Right cardiac atrium (tissue), 5 donors: ENCODE measurements at regions of chr11 and their contacts with region 1.

Region 1: GRCh38 chr11:9015677-9016076 is 11.9 kb upstream of the NRIP3 start:
- DNase-seq: peak; percentile 51 to 74 (median 64)
- ATAC-seq: peak; percentile 70 to 80
- H3K4me3 ChIP-seq: no peak overlapping the region
- H3K27ac ChIP-seq: no peak overlapping the region
- H3K4me1 ChIP-seq: peaks cover 13% of the 10 kb centered on the region
- H3K27me3 ChIP-seq: no peaks in the 10 kb centered on the region

Region 2: DNA sequence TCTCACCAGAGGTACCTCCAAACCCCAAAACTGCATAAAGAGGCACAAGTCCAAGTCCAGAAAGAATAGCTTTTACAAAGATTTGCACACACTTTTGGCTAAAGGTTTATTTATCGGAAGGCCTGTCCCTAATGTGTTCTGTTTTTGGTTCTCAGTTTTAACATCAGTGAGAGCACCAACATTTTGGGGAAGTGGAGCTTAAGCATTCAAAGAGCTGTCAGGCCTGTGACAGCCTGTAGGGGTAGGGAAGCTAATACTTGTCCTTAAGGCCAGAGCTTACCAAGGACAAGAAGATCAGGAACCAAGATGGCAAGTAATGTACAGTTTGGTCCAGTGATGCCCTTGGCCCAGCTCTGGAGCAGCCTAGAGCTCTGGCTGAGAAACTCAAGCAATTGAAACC is 114.6 kb after region 1 on chr11:
- intact Hi-C with region 1: loop called in 3 of 4 experiments (anchors 5 kb)
- DNase-seq: no peak
- ATAC-seq: no peak
- H3K4me3 ChIP-seq: no peak overlapping the region
- H3K27ac ChIP-seq: no peak overlapping the region
- H3K4me1 ChIP-seq: no peaks in the 10 kb centered on the region
- H3K27me3 ChIP-seq: no peaks in the 10 kb centered on the region

Region 3: DNA sequence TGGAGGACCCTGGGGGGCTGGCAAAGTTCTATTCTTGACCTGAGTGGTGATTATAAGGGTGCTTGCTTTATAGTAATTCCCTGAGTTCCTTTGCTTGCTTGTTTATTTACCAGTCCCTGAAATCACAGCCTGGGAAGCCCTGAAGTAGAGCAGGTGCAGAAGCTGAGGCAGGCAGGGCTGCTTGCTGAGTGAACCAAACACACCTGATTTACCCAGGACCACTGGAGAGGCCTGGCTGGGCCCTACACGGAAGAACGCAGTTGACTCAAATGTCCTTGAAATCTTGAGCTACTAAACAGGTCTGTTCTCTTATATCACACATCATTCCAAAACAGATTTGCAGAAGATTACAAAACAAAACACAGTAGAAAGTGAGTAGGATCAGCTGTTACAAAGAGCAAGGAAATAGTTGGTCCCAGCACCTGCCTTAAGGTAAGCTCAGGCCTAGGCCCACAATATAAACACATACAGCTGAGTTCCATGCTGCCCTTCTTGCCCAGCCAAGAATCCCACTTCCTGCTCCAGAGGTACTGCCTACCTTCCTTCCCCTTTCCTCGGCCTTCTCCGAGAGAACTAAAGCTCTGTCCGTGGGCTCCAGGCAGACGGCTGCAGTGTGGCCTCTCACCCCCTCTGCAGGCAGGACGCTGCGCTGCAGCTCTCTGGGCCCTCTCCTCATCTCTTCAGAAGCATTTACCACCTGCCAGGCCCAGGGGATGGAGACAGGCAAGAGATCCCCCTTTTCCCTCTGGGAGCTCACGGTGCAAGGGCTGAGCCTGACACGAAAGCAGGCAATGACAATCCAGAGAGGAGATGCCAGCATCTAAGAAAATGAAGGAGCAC is 121.8 kb after region 1 on chr11:
- intact Hi-C with region 1: loop called in 3 of 4 experiments (anchors 5 kb)
- DNase-seq: peak; percentile 65 to 90 (median 89)
- ATAC-seq: peak; percentile 88 to 91
- H3K4me3 ChIP-seq: no peak overlapping the region
- H3K27ac ChIP-seq: no peak overlapping the region
- H3K4me1 ChIP-seq: no peaks in the 10 kb centered on the region
- H3K27me3 ChIP-seq: no peaks in the 10 kb centered on the region

Region 4: GRCh38 chr11:9347100-9347499 is 331.4 kb after region 1 on chr11:
- intact Hi-C with region 1: no loop called
- DNase-seq: no peak
- ATAC-seq: no peak
- H3K4me3 ChIP-seq: no peak overlapping the region
- H3K27ac ChIP-seq: no peak overlapping the region
- H3K4me1 ChIP-seq: peaks cover 2% of the 10 kb centered on the region
- H3K27me3 ChIP-seq: no peaks in the 10 kb centered on the region

Region 5: DNA sequence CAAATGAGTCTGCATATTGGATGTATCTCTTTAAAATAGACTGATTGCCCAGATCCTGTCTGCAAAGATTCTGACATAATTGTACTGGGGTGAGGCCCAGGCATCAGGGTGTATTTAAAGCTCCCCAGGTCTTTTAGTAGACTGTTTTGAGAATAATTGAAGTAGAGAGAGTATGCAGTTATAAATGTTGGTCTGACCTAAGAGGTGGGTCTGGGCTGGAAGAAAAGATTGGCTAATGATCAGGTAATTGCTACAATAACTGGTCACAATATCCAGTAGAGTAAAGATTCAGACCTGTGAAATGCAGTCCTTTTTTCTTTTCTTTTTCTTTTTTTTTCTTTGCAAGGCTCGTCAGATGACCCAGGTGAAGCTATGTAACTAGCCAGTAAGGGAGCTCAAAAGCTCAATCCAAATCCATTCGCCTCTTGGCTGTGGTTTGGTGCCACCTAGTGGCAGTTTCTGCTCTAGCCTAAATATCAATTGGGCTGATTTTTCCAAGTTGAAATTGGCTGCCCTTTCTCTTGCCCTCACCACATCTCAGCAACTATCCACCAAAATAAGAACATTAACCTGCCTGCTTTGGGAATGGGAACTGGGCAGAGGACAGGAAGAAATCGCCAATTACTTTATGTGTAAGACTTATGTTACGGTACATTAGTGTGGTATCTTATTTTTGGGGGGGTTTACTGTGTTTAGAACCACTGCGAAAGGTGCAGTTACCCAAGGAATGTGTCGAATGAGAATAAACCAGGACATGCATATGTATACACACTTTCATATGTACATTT is 491.0 kb after region 1 on chr11:
- intact Hi-C with region 1: loop called in 1 of 4 experiments (anchors 10 kb)
- DNase-seq: peak; percentile 69 to 87 (median 69)
- ATAC-seq: peak; percentile 79 to 87
- H3K4me3 ChIP-seq: no peak overlapping the region
- H3K27ac ChIP-seq: no peak overlapping the region
- H3K4me1 ChIP-seq: no peaks in the 10 kb centered on the region
- H3K27me3 ChIP-seq: no peaks in the 10 kb centered on the region